Breast epithelium (tissue), 4 donors: ENCODE measurements at regions of chr6 and their contacts with region 1.

Region 1: DNA sequence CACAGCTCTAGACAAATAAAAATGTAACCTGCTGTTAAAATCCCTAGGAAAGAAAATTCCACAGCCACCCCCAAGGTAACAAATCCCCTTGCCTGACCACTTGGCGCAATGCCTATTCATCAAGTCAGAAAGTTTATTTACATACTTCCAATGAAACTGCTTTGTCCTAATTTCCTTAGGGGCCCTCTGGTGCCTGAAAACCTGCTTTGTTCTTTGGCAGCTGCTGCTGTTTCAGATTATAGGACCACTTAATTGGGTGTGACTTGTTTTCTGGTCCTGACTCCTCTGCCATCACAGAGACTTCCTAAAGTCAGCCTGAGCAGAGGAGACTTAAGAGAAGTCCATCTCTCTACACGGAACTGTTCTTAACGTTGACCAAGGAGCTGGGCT is 323.6 kb downstream of the UBE3D start:
- DNase-seq: no peak
- H3K4me3 ChIP-seq: no peak overlapping the region
- H3K27ac ChIP-seq: no peak overlapping the region
- H3K4me1 ChIP-seq: no peaks in the 10 kb centered on the region
- H3K27me3 ChIP-seq: no peaks in the 10 kb centered on the region
- CTCF ChIP-seq: no peak
- POLR2A ChIP-seq: no peak

Region 2: GRCh38 chr6:83574787-83575186 is 832.8 kb after region 1 on chr6:
- intact Hi-C with region 1: loop called (anchors 5 kb)
- DNase-seq: no peak
- H3K4me3 ChIP-seq: no peak overlapping the region
- H3K27ac ChIP-seq: no peak overlapping the region
- H3K4me1 ChIP-seq: no peaks in the 10 kb centered on the region
- H3K27me3 ChIP-seq: no peaks in the 10 kb centered on the region
- CTCF ChIP-seq: no peak
- POLR2A ChIP-seq: no peak